Motor neuron (in vitro differentiated cells): ENCODE measurements at regions of chr14 and their contacts with region 1.

Region 1: DNA sequence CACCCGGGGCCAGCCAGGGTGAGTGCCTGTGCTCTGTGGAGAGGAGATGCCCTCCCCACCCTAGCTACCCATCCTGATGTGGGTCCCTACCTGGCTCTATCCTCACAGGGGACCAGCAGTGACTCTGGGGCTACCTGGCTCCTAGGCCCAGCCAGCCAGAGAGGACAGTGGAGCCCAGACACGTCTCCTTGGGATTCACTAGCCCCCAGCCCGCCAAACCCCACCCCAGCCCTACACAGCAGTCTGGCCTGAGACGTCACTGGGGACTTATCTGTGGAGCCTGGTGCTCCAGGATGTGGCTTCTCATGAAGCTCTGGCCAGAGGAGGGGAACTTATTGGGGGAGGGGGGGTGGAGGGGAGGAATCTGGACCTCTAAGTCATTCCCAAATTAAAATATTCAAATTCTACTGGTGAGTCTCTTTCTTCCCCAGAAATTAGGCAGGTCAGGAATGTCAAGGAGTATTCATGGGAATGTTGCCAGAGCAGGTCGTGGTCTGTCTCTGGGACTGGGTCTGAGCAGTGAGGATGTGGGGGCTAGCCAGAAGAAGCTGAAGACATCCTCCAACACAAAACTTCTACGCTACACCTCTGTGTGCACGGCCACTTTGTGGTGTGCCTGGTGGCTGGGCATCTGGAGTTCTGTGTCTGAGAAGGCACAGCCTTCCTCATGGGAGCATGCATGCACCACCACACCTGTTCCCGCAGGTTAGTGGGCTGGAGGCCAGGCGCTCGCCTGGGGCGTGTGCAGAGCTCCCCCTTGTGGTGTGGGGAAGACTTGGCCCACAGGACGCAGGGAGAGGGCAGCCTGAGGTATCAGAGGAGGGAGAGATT is 2.7 kb downstream of the CMTM5 start:
- ATAC-seq: peak in 7 of 8 experiments; percentile 38 to 93 (median 74)
- H3K4me3 ChIP-seq: no peak overlapping the region
- H3K27ac ChIP-seq: no peak overlapping the region
- H3K4me1 ChIP-seq: no peaks in the 10 kb centered on the region

Region 2: DNA sequence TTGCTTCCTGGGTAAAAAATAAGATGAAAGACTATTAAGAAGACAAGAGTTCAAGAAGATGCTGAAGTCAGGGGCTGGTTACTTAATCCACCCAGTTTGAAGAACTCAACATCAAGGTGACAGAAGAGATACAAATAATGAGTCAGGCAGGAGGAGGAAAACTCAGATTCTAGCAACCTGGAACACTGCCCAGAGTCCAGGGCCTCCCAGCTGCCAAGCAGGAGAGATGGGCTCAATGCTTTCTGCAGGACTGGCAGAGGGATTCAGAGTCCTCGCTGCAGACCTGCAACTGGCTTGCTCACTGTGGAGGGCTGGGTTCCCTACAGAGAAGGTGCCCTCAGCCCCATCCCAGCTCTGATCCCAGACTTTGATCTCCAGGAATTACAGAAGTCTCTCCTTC is 231.9 kb before region 1 on chr14:
- in situ Hi-C with region 1: no loop called
- ATAC-seq: peak in 1 of 8 experiments; percentile 35
- H3K4me3 ChIP-seq: no peak overlapping the region
- H3K27ac ChIP-seq: no peak overlapping the region
- H3K4me1 ChIP-seq: no peaks in the 10 kb centered on the region

Region 3: GRCh38 chr14:23320774-23321571 is 58.6 kb before region 1 on chr14 and contains the start of gene PABPN1:
- in situ Hi-C with region 1: loop called in 1 of 9 experiments (anchors 10 kb)
- ATAC-seq: peak; percentile 83 to 94 (median 92)
- H3K4me3 ChIP-seq: peak within 1 kb of the TSS; percentile 65 to 86 (median 72)
- H3K27ac ChIP-seq: peak within 1 kb of the TSS; percentile 91 to 97
- H3K4me1 ChIP-seq: peaks cover 16 to 17% of the 10 kb centered on the region in 2 donors
- total RNA-seq, gene PABPN1: 57.2 to 162 (median 91.9) TPM